ENCODE measurements at regions of chr4 and their contacts with region 1.

Region 1: DNA sequence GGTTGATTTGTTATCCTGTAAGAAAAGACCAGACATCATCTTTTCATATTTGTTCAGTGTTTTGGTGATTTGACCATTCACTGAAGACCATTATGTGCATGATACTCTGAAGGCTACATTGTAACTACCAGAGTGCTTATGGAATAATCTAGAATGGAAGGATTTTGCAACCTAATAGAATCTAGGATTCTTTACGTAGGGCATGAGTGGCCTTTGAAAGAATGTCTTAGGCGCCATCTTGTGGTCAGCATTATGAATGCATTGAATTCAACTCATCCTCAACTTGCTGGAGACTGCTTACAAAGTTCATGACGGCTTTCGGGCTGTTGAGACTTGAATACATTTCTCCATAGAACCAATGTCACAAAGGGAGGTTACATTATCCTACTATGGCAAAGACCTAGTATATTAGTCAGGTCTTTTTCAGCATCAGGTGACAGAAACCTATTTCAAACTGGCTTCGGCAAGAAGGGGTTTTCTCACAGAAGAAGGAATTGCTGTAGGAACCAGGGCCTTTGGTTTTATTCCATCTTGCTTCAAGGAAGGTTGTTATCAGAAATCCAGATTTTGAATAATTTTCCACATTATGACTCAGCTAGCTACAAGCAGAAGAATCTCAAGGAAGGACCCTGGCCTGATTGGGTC is 104.1 kb downstream of the GPAT3 start:
- DNase-seq: peak; percentile 14 to 57 (median 52)
- H3K4me3 ChIP-seq: no peak overlapping the region
- H3K4me3 Mint-ChIP-seq: no peak overlapping the region
- H3K27ac ChIP-seq: no peak overlapping the region
- H3K27ac Mint-ChIP-seq: no peak overlapping the region
- H3K4me1 ChIP-seq: no peaks in the 10 kb centered on the region
- H3K4me1 Mint-ChIP-seq: peaks cover 1 to 4% (median 4%) of the 10 kb centered on the region in 3 donors
- H3K27me3 ChIP-seq: no peaks in the 10 kb centered on the region
- H3K27me3 Mint-ChIP-seq: peaks cover 7 to 18% of the 10 kb centered on the region in 2 donors

Region 2: DNA sequence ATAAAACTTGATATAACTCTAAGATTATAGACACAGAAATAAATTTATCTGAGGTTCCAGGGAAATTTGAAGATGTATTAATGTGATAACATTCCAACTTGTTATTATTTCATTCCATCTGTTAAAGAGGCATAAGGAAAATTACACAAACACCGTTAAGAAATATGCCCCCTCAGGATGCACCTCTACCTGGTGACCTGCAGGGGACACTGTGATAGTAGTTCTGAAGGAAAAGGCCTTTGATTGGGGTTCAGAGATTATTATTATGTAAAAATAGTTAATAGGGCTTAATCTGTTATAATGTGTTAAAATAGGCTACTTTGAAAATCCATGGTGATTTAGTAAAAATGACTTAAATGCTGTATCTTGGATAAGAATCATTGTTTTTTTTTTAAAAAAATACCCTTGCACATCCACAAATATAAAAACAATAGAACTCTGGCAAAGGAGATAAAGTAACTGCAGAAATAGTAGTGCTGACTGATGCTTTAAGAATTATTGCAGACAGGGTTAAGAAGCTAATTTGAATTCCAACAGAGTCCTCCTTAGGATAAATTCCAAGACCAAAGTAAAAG is 149.0 kb before region 1 on chr4:
- CTCF ChIA-PET with region 1: interaction called, 22 read pairs
- POLR2A ChIA-PET with region 1: no interaction called
- DNase-seq: peak in 2 of 5 donors; percentile 7 to 39
- H3K4me3 ChIP-seq: no peak overlapping the region
- H3K4me3 Mint-ChIP-seq: peak overlapping the region in 1 of 7 donors; percentile 40
- H3K27ac ChIP-seq: no peak overlapping the region
- H3K27ac Mint-ChIP-seq: peak overlapping the region in 1 of 8 donors; percentile 42
- H3K4me1 ChIP-seq: no peaks in the 10 kb centered on the region
- H3K4me1 Mint-ChIP-seq: peaks cover 3 to 4% (median 3%) of the 10 kb centered on the region in 3 donors
- H3K27me3 ChIP-seq: no peaks in the 10 kb centered on the region
- H3K27me3 Mint-ChIP-seq: no peaks in the 10 kb centered on the region

Region 3: GRCh38 chr4:83510442-83510841 is 129.5 kb before region 1 on chr4:
- CTCF ChIA-PET with region 1: interaction called, 46 read pairs
- POLR2A ChIA-PET with region 1: no interaction called
- DNase-seq: no peak
- H3K4me3 ChIP-seq: no peak overlapping the region
- H3K4me3 Mint-ChIP-seq: no peak overlapping the region
- H3K27ac ChIP-seq: no peak overlapping the region
- H3K27ac Mint-ChIP-seq: peak overlapping the region in 1 of 8 donors; percentile 74
- H3K4me1 ChIP-seq: no peaks in the 10 kb centered on the region
- H3K4me1 Mint-ChIP-seq: no peaks in the 10 kb centered on the region
- H3K27me3 ChIP-seq: no peaks in the 10 kb centered on the region
- H3K27me3 Mint-ChIP-seq: peaks cover 1 to 4% of the 10 kb centered on the region in 2 donors

Region 4: GRCh38 chr4:83657295-83657694 is 17.3 kb after region 1 on chr4:
- CTCF ChIA-PET with region 1: interaction called, 19 read pairs
- POLR2A ChIA-PET with region 1: no interaction called
- DNase-seq: no peak
- H3K4me3 ChIP-seq: no peak overlapping the region
- H3K4me3 Mint-ChIP-seq: peak overlapping the region in 1 of 7 donors; percentile 49
- H3K27ac ChIP-seq: no peak overlapping the region
- H3K27ac Mint-ChIP-seq: no peak overlapping the region
- H3K4me1 ChIP-seq: peaks cover 9% of the 10 kb centered on the region
- H3K4me1 Mint-ChIP-seq: peaks cover 8 to 15% (median 15%) of the 10 kb centered on the region in 3 donors
- H3K27me3 ChIP-seq: no peaks in the 10 kb centered on the region
- H3K27me3 Mint-ChIP-seq: peaks cover 4 to 20% of the 10 kb centered on the region in 2 donors

Region 5: GRCh38 chr4:83855044-83855443 is 215.1 kb after region 1 on chr4:
- CTCF ChIA-PET with region 1: no interaction called
- POLR2A ChIA-PET with region 1: no interaction called
- DNase-seq: no peak
- H3K4me3 ChIP-seq: no peak overlapping the region
- H3K4me3 Mint-ChIP-seq: no peak overlapping the region
- H3K27ac ChIP-seq: no peak overlapping the region
- H3K27ac Mint-ChIP-seq: no peak overlapping the region
- H3K4me1 ChIP-seq: no peaks in the 10 kb centered on the region
- H3K4me1 Mint-ChIP-seq: no peaks in the 10 kb centered on the region
- H3K27me3 ChIP-seq: no peaks in the 10 kb centered on the region
- H3K27me3 Mint-ChIP-seq: peaks cover 0 to 4% of the 10 kb centered on the region in 2 donors